Testis (tissue), 5 donors: ENCODE measurements at regions of chr18 and their contacts with region 1.

Region 1: GRCh38 chr18:12657684-12658425 is at the start of gene SPIRE1:
- DNase-seq: peak; percentile 79
- H3K4me3 ChIP-seq: peak within 1 kb of the TSS; percentile 86 to 93
- H3K27ac ChIP-seq: peak within 1 kb of the TSS; percentile 96 to 98
- H3K4me1 ChIP-seq: peaks cover 18% of the 10 kb centered on the region
- H3K27me3 ChIP-seq: no peaks in the 10 kb centered on the region
- CTCF ChIP-seq: peak in 1 of 3 experiments; percentile 12
- POLR2A ChIP-seq: no peak
- total RNA-seq, gene SPIRE1: 46.8 to 67.6 TPM

Region 2: DNA sequence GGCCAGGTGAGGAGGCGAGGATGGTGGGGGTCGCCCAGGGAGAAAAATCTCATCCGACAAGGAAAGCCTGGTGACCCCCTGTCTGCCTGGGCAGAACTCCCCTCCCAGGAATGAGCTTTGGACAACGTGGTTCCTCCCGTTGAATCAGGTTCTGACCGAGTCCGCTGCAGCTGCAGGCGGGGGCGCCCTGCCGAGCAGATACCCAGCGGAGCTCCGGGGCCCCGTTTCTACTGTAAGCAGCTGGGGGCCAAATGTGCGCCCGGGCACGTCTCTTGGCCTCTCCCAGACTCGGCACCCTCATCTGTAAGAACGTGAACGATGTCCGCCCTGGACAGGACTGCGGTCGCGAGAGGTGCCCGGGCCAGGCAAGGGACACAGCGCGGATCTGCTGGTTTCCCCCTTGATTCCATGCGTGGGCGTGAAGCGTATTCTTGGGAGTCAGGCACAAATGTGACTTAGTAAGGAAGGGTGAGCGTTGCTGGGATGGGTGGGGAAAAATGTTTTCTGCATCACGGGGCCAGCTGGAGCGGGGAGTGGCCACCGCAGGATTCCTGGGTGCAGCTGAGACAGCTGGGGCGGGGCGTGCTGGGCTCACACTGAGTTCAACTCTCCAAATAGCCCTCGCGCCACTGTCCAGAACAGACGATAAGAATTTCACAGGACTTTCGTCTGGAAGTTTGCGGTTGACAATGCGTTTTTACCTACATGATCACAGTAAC is 370.0 kb before region 1 on chr18:
- intact Hi-C with region 1: loop called (anchors 10 kb)
- DNase-seq: peak; percentile 84
- H3K4me3 ChIP-seq: peak overlapping the region; percentile 34 to 52
- H3K27ac ChIP-seq: peak overlapping the region in 1 of 2 donors; percentile 60
- H3K4me1 ChIP-seq: peaks cover 11% of the 10 kb centered on the region
- H3K27me3 ChIP-seq: no peaks in the 10 kb centered on the region
- CTCF ChIP-seq: no peak
- POLR2A ChIP-seq: no peak

Region 3: GRCh38 chr18:12376718-12377555 is 280.9 kb before region 1 on chr18 and contains the start of gene AFG3L2:
- intact Hi-C with region 1: loop called (anchors 5 kb)
- DNase-seq: peak; percentile 100
- H3K4me3 ChIP-seq: peak within 1 kb of the TSS; percentile 72 to 87
- H3K27ac ChIP-seq: peak within 1 kb of the TSS; percentile 90 to 99
- H3K4me1 ChIP-seq: peaks cover 20% of the 10 kb centered on the region
- H3K27me3 ChIP-seq: no peaks in the 10 kb centered on the region
- CTCF ChIP-seq: peak in 1 of 3 experiments; percentile 9
- POLR2A ChIP-seq: peak; percentile 91
- total RNA-seq, gene AFG3L2: 57.4 to 63.6 TPM

Region 4: GRCh38 chr18:12391618-12392165 is 266.2 kb before region 1 on chr18:
- intact Hi-C with region 1: loop called (anchors 5 kb)
- DNase-seq: peak; percentile 81
- H3K4me3 ChIP-seq: no peak overlapping the region
- H3K27ac ChIP-seq: no peak overlapping the region
- H3K4me1 ChIP-seq: no peaks in the 10 kb centered on the region
- H3K27me3 ChIP-seq: no peaks in the 10 kb centered on the region
- CTCF ChIP-seq: peak; percentile 71 to 79 (median 79)
- POLR2A ChIP-seq: no peak